ENCODE measurements at regions of chr6 and their contacts with region 1.

Region 1: DNA sequence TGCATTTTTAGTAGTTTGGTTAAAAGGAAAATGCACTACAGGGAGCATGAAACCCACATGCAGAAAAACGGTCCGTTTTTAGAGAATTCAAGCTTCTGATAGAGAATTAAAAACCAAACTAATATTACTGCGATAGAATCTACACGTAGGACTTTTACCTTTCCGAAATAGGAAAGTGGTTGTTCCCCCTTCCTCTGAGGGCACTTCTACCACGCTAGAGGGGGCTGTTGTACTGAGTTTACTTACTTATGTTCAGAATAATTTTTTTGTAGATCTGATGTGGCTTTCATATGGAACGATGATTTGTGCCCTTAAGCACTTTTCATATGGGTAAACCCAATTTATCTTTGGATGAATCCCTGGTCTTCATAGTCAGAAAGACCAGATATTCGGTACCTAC is 264.3 kb upstream of the PLN start:
- DNase-seq: peak in 2 of 3 donors; percentile 23 to 54
- ATAC-seq: peak; percentile 60 to 71
- H3K4me3 ChIP-seq: no peak overlapping the region
- H3K27ac ChIP-seq: no peak overlapping the region
- H3K4me1 ChIP-seq: peaks cover 2% of the 10 kb centered on the region
- H3K27me3 ChIP-seq: no peaks in the 10 kb centered on the region

Region 2: DNA sequence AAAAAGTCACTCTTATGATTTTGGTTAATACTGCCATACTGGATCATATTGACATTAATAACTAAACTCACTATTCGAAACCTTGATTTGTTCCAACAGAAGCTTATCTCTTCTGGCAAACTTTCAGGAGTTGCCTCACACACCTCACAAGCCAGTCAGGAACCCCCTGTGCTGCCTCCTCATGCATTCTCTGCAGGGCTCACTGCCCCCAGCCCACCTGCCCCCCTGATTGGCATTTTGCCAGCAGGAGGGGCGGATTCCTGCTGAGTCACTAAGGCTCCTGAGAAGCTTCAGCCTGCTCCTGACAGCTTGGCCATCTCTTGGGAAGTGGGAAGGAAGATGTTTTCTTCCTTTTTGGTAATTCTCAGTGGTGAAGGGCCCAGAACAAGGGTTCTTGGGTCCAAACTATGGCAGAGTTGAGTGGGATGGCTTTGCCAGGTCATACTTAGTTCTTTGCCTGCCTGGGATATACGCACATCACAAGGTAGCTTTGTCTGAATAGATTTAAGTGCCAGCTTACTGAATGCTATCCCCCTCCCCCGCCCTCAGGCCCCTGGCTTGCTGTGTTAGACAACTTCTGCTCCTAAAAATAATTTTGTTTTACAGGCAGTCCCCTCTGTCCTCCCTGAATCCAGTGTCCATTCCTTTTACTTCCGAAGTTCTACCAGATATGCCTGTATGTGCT is 345.3 kb before region 1 on chr6:
- intact Hi-C with region 1: no loop called
- DNase-seq: peak in 1 of 3 donors; percentile 37
- ATAC-seq: no peak
- H3K4me3 ChIP-seq: no peak overlapping the region
- H3K27ac ChIP-seq: no peak overlapping the region
- H3K4me1 ChIP-seq: no peaks in the 10 kb centered on the region
- H3K27me3 ChIP-seq: no peaks in the 10 kb centered on the region

Region 3: DNA sequence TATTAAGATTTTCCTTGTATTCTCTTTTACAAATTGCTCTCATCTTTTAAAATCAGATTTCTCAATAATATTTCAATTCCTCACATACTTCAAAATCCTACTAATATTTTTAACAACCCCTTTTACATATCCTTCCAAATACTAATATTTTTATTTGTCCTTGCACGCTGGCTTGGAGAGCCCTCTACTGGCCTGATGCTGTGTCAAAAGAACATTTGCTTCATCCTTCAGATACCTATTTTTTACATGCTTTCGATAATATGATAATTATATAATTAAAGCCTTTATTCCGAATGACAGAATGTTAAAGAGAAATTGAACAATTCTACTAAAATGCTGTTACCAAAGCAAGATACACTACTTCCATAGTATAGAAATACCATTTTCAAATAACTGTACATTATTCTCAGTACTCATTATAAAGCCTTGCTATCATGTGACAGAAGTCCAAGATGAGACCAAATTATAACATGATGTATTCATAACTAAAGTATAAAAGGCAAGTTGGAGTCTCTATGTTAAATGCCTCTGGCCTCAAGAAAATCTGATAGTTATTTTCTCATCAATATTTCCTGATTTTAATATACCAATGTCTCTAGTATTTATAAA is 225.3 kb after region 1 on chr6:
- intact Hi-C with region 1: loop called (anchors 2 to 10 kb)
- DNase-seq: peak in 2 of 3 donors; percentile 54 to 58
- ATAC-seq: no peak
- H3K4me3 ChIP-seq: no peak overlapping the region
- H3K27ac ChIP-seq: no peak overlapping the region
- H3K4me1 ChIP-seq: no peaks in the 10 kb centered on the region
- H3K27me3 ChIP-seq: no peaks in the 10 kb centered on the region

Region 4: GRCh38 chr6:118514689-118515088 is 230.9 kb after region 1 on chr6:
- intact Hi-C with region 1: loop called in 3 of 4 experiments (anchors 5 to 10 kb)
- DNase-seq: peak in 2 of 3 donors; percentile 28 to 66
- ATAC-seq: peak; percentile 94 to 98
- H3K4me3 ChIP-seq: no peak overlapping the region
- H3K27ac ChIP-seq: no peak overlapping the region
- H3K4me1 ChIP-seq: no peaks in the 10 kb centered on the region
- H3K27me3 ChIP-seq: no peaks in the 10 kb centered on the region

Region 5: GRCh38 chr6:118551063-118552053 is 267.6 kb after region 1 on chr6:
- intact Hi-C with region 1: loop called in 1 of 4 experiments (anchors 5 kb)
- DNase-seq: no peak
- ATAC-seq: peak; percentile 75 to 78
- H3K4me3 ChIP-seq: peak overlapping the region; percentile 74
- H3K27ac ChIP-seq: no peak overlapping the region
- H3K4me1 ChIP-seq: no peaks in the 10 kb centered on the region
- H3K27me3 ChIP-seq: no peaks in the 10 kb centered on the region

Region 6: GRCh38 chr6:118580585-118581419 is 297.0 kb after region 1 on chr6:
- intact Hi-C with region 1: loop called in 3 of 4 experiments (anchors 5 to 10 kb)
- DNase-seq: peak in 2 of 3 donors; percentile 30 to 41
- ATAC-seq: peak; percentile 89 to 92
- H3K4me3 ChIP-seq: no peak overlapping the region
- H3K27ac ChIP-seq: no peak overlapping the region
- H3K4me1 ChIP-seq: no peaks in the 10 kb centered on the region
- H3K27me3 ChIP-seq: no peaks in the 10 kb centered on the region

Region 7: DNA sequence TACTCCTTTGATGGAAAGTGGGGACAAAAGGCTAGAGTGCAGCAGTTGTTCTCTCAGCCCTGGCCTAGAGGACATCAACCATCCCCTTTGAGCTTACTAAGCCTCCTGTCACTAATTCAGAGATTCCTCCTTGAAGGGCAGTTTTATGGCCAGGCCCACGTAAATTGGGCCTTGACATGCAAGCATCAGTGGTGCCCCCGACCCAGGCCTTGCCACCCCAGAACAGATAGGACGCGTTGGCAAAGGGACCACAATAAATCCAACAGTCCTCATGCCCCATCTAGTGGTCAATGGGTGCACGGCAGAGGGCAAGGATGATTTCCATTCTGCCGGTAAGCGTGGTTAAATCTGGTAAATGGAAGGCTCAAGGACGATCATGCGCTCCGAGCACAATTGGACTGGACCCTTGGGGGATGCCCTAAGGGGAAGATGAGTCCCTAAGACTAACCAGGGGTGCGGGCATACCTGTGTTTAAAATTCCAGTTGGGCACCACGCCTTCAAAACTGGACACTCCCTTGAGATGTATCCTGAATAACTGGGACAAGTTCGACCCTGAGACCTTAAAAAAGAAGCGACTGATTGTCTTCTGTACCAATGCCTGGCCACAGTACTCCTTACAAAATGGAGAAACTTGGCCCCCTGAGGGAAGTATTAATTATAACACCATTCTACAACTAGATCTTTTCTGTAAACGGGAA is 335.1 kb after region 1 on chr6:
- intact Hi-C with region 1: loop called in 2 of 4 experiments (anchors 10 kb)
- DNase-seq: peak; percentile 26 to 71 (median 63)
- ATAC-seq: peak; percentile 84 to 88
- H3K4me3 ChIP-seq: no peak overlapping the region
- H3K27ac ChIP-seq: no peak overlapping the region
- H3K4me1 ChIP-seq: no peaks in the 10 kb centered on the region
- H3K27me3 ChIP-seq: no peaks in the 10 kb centered on the region

Region 8: GRCh38 chr6:118776607-118777549 is 493.1 kb after region 1 on chr6:
- intact Hi-C with region 1: loop called in 2 of 4 experiments (anchors 10 kb)
- DNase-seq: peak in 2 of 3 donors; percentile 41 to 72
- ATAC-seq: peak; percentile 74
- H3K4me3 ChIP-seq: peak overlapping the region; percentile 4
- H3K27ac ChIP-seq: no peak overlapping the region
- H3K4me1 ChIP-seq: no peaks in the 10 kb centered on the region
- H3K27me3 ChIP-seq: no peaks in the 10 kb centered on the region